PC-9 (cell line): ENCODE measurements at regions of chr4 and their contacts with region 1.

Region 1: DNA sequence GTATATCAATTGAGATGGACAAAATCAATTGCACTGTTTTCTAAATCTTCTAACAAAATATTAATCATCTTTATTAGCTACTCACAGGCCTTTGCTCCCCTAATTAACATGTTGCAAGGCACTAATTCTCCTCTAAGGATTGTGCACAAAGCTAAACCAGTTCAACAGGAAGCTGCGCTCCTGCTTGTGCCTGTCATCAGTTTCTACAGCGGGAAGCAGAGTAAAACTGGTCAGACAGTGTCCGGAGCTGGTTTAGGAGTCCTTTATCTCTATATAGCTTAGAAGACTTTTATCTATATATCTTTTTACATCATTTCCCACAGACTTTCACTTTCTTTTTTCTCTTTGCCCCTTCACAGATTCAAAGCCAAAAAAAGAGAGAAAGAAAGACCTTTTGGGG is 79.1 kb downstream of the ELOVL6 start:
- DNase-seq: peak; percentile 57 to 90
- H3K4me3 ChIP-seq: peak overlapping the region; percentile 57
- H3K27ac ChIP-seq: peak overlapping the region; percentile 96
- H3K4me1 ChIP-seq: peaks cover 25% of the 10 kb centered on the region
- H3K27me3 ChIP-seq: no peaks in the 10 kb centered on the region
- CTCF ChIP-seq: no peak

Region 2: DNA sequence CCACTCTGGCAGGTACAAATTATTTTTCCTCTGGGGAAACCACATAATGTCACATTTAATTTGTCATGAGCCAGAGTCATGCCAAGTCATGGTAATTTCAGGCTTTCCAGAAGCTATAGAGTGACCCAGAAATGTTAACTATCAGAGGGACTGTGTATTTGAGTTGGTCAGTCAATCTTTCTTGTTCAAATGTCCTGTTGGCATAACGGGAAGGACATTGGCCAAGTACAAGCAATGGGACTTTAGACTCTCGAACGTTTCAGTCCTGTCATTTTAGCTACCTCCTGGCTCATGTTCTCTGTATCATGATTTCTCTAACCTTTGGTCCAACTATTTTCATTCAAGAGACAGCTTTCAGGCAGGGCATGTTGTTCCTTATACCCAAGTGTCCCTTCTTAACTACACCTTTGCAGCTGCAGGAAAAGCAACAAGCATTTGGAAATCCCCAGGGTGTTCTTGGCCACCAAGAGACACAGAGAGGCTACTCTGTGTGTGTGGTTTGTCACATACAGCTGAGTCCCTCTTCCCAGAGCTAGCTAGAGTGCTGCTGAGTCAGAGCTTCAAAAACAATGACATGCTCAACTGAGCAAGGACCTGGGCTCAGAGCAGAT is 64.1 kb before region 1 on chr4:
- CTCF ChIA-PET with region 1: interaction called, 13 read pairs
- POLR2A ChIA-PET with region 1: no interaction called
- intact Hi-C with region 1: no loop called
- DNase-seq: no peak
- H3K4me3 ChIP-seq: no peak overlapping the region
- H3K27ac ChIP-seq: no peak overlapping the region
- H3K4me1 ChIP-seq: peaks cover 17% of the 10 kb centered on the region; the same call in 1 of the 2 replicates
- H3K27me3 ChIP-seq: no peaks in the 10 kb centered on the region
- CTCF ChIP-seq: no peak

Region 3: GRCh38 chr4:110165382-110166285 is 46.3 kb after region 1 on chr4:
- CTCF ChIA-PET with region 1: no interaction called
- POLR2A ChIA-PET with region 1: no interaction called
- intact Hi-C with region 1: loop called (anchors 2 kb)
- DNase-seq: peak in 1 of 2 experiments; percentile 86
- H3K4me3 ChIP-seq: no peak overlapping the region
- H3K27ac ChIP-seq: peak overlapping the region; percentile 98
- H3K4me1 ChIP-seq: peaks cover 55% of the 10 kb centered on the region
- H3K27me3 ChIP-seq: no peaks in the 10 kb centered on the region
- CTCF ChIP-seq: no peak